Activated CD4-positive, alpha-beta T cell treated with anti-CD3 and anti-CD28 coated beads, Interleukin-2, amount 10 ng/mL, durations not matched to agents 24 days and 14 days (primary cell): ENCODE measurements at regions of chr5 and their contacts with region 1.

Region 1: DNA sequence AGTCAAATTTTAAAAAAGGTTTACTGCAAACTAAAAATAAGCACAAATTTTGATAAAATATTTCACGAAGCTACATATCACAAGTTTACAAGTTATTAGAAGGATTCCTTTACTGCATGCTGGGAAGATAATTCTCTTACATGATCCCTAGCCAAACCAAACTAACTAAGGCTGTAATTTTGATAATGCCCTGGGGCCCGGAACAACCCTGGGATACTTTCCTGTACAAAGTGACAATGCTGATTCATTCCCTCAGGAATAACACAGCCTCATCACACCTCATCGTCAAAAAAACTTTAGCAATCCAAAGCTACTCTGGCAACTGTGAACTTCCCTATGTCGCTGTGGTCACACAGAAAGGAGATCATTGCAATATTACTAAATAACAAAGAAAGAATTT is 402.9 kb downstream of the RAB3C start:
- DNase-seq: no peak
- H3K4me3 Mint-ChIP-seq: no peak overlapping the region
- H3K27ac Mint-ChIP-seq: no peak overlapping the region
- H3K4me1 Mint-ChIP-seq: peaks cover 11% of the 10 kb centered on the region
- H3K27me3 Mint-ChIP-seq: no peaks in the 10 kb centered on the region

Region 2: GRCh38 chr5:58972301-58972700 is 13.5 kb before region 1 on chr5:
- intact Hi-C with region 1: loop called (anchors 2 kb)
- DNase-seq: no peak
- H3K4me3 Mint-ChIP-seq: no peak overlapping the region
- H3K27ac Mint-ChIP-seq: no peak overlapping the region
- H3K4me1 Mint-ChIP-seq: peaks cover 6% of the 10 kb centered on the region
- H3K27me3 Mint-ChIP-seq: no peaks in the 10 kb centered on the region